ENCODE measurements at regions of chr21 and their contacts with region 1.

Region 1: DNA sequence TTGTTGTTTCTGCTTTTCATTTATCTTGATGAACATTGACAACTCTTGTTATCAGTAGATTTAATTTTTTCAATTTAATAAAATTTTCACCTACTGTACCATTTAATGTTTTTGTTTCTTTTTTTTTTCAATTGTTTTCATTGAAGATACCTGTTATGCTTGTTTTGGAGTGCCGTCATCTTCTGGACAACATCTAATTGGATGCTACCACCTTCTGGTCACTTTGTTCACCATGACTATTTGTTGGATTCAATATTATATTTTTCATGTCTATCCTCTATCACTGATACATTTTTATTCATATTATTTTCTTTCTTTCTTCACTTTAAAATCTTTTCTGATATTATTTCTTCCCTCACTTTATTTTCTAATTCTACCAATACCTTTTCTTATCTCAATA is 14.0 kb downstream of the KRTAP21-2 start:
- DNase-seq: no peak
- H3K4me3 Mint-ChIP-seq: no peak overlapping the region
- H3K27ac Mint-ChIP-seq: no peak overlapping the region
- H3K4me1 Mint-ChIP-seq: peaks cover 1% of the 10 kb centered on the region
- H3K27me3 Mint-ChIP-seq: peaks cover 28% of the 10 kb centered on the region

Region 2: GRCh38 chr21:30502041-30502440 is 231.0 kb before region 1 on chr21 and contains the start of gene KRTAP19-5:
- intact Hi-C with region 1: loop called (anchors 10 kb)
- DNase-seq: no peak
- H3K4me3 Mint-ChIP-seq: no peak within 1 kb of the TSS
- H3K27ac Mint-ChIP-seq: no peak within 1 kb of the TSS
- H3K4me1 Mint-ChIP-seq: no peaks in the 10 kb centered on the region
- H3K27me3 Mint-ChIP-seq: no peaks in the 10 kb centered on the region
- total RNA-seq, gene KRTAP19-5: not detected in 2 replicates

Region 3: DNA sequence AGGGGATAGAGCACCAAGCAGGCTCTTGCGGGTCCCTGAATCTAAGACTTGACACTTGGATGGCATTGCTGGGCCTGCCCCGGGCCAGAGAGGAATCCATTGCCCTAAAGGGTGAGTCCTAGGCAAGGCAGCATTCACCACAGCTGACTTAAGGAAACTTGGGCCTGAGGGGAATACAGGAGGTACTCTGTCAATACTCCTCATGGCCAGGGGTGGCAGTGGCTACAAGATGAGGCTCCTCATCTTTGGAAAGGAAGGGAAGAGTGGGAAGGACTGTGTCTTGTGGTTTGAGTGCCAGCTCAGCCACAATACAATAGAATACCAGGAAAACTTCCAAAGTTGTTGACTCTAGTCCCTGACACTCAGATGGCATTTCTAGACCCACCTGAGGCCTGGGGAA is 127.1 kb before region 1 on chr21:
- intact Hi-C with region 1: no loop called
- DNase-seq: no peak
- H3K4me3 Mint-ChIP-seq: no peak overlapping the region
- H3K27ac Mint-ChIP-seq: no peak overlapping the region
- H3K4me1 Mint-ChIP-seq: no peaks in the 10 kb centered on the region
- H3K27me3 Mint-ChIP-seq: no peaks in the 10 kb centered on the region

Measured in activated T-helper 2 cell treated with anti-CD3 and anti-CD28 coated beads, Interferon-gamma antibody, Interleukin-2, Interleukin-4, amounts not matched to agents 10 μg/mL and 5 μg/mL and 100 μg/mL, durations not matched to agents 14 hours and 24 hours and 36 hours (primary cell).